Endothelial cell of umbilical vein (primary cell): ENCODE measurements at regions of chr9 and their contacts with region 1.

Region 1: GRCh38 chr9:35732122-35732799 is at the starts of genes CREB3 and TLN1:
- DNase-seq: peak; percentile 99
- H3K4me3 ChIP-seq: peak within 1 kb of the TSS; percentile 46 to 92 (median 79)
- H3K27ac ChIP-seq: peak within 1 kb of the TSS; percentile 79
- H3K4me1 ChIP-seq: peaks cover 55% of the 10 kb centered on the region
- H3K27me3 ChIP-seq: no peaks in the 10 kb centered on the region
- CTCF ChIP-seq: peak in 1 of 2 donors; percentile 14
- POLR2A ChIP-seq: peak; percentile 48
- total RNA-seq, gene CREB3: 36.4 and 39.8 TPM in 2 replicates
- total RNA-seq, gene TLN1: 424 and 450 TPM in 2 replicates

Region 2: DNA sequence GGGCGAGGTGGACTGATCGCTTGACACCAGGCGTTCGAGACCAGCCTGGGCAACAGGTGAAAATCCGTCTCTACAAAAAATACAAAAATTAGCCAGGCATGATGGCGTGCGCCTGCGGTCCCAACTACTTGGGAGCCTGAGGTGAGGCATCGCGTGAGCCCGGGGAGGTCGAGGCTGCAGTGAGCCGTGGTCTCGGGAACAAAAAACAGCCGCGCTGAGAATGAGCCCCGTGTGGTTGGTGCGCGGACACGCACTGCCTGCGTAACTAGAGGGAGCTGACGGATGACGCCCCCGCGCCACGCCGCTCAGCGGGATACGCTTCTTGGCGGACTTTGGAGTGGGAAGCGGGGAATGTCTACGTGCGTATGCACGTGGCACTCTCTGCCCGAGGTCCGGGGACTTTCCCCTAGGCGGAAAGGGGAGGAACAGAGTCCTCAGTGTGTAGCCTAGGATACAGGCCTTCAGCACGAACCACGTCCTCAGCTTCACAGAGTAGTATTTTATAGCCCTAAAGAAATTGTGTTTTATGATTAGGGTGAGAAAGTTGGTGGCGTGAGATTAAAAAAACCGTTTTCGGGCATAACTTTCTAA is 74.6 kb before region 1 on chr9 and contains the start of gene RMRP:
- CTCF ChIA-PET with region 1: interaction called, 9 read pairs
- POLR2A ChIA-PET with region 1: no interaction called
- dilution Hi-C with region 1: no loop called
- intact Hi-C with region 1: loop called (anchors 1 kb)
- DNase-seq: peak; percentile 99
- H3K4me3 ChIP-seq: peak within 1 kb of the TSS; percentile 84 to 87 (median 86)
- H3K27ac ChIP-seq: peak within 1 kb of the TSS; percentile 94
- H3K4me1 ChIP-seq: peaks cover 10% of the 10 kb centered on the region
- H3K27me3 ChIP-seq: no peaks in the 10 kb centered on the region
- CTCF ChIP-seq: peak in 1 of 2 donors; percentile 37
- POLR2A ChIP-seq: no peak
- total RNA-seq, gene RMRP: 19,118 and 22,385 TPM in 2 replicates

Region 3: GRCh38 chr9:35748858-35749514 is 16.7 kb after region 1 on chr9 and contains the starts of genes GBA2 and RGP1:
- CTCF ChIA-PET with region 1: interaction called, 86 read pairs
- POLR2A ChIA-PET with region 1: interaction called, 5 read pairs
- dilution Hi-C with region 1: no loop called
- intact Hi-C with region 1: loop called (anchors 1 kb)
- DNase-seq: peak; percentile 75
- H3K4me3 ChIP-seq: peak within 1 kb of the TSS; percentile 66 to 99 (median 87)
- H3K27ac ChIP-seq: peak within 1 kb of the TSS; percentile 84
- H3K4me1 ChIP-seq: peaks cover 69% of the 10 kb centered on the region
- H3K27me3 ChIP-seq: no peaks in the 10 kb centered on the region
- CTCF ChIP-seq: no peak
- POLR2A ChIP-seq: peak; percentile 72
- total RNA-seq, gene GBA2: 158 and 196 TPM in 2 replicates
- total RNA-seq, gene RGP1: 23.3 and 29.0 TPM in 2 replicates

Region 4: GRCh38 chr9:35774907-35775635 is 42.8 kb after region 1 on chr9:
- CTCF ChIA-PET with region 1: interaction called, 13 read pairs
- POLR2A ChIA-PET with region 1: interaction called, 3 read pairs
- dilution Hi-C with region 1: no loop called
- intact Hi-C with region 1: loop called (anchors 1 kb)
- DNase-seq: peak; percentile 79
- H3K4me3 ChIP-seq: peak overlapping the region in 1 of 3 experiments; percentile 13
- H3K27ac ChIP-seq: peak overlapping the region; percentile 52
- H3K4me1 ChIP-seq: peaks cover 36% of the 10 kb centered on the region
- H3K27me3 ChIP-seq: no peaks in the 10 kb centered on the region
- CTCF ChIP-seq: no peak
- POLR2A ChIP-seq: no peak

Region 5: GRCh38 chr9:35829084-35829763 is 97.0 kb after region 1 on chr9 and contains the start of gene TMEM8B:
- CTCF ChIA-PET with region 1: interaction called, 32 read pairs
- POLR2A ChIA-PET with region 1: no interaction called
- dilution Hi-C with region 1: no loop called
- intact Hi-C with region 1: loop called (anchors 1 kb)
- DNase-seq: peak; percentile 91
- H3K4me3 ChIP-seq: peak within 1 kb of the TSS; percentile 54 to 60 (median 60)
- H3K27ac ChIP-seq: peak within 1 kb of the TSS; percentile 34
- H3K4me1 ChIP-seq: peaks cover 9% of the 10 kb centered on the region
- H3K27me3 ChIP-seq: no peaks in the 10 kb centered on the region
- CTCF ChIP-seq: no peak
- POLR2A ChIP-seq: peak; percentile 57
- total RNA-seq, gene TMEM8B: 2.5 and 2.9 TPM in 2 replicates